GM12878 (cell line): ENCODE measurements at regions of chr21 and their contacts with region 1.

Region 1: DNA sequence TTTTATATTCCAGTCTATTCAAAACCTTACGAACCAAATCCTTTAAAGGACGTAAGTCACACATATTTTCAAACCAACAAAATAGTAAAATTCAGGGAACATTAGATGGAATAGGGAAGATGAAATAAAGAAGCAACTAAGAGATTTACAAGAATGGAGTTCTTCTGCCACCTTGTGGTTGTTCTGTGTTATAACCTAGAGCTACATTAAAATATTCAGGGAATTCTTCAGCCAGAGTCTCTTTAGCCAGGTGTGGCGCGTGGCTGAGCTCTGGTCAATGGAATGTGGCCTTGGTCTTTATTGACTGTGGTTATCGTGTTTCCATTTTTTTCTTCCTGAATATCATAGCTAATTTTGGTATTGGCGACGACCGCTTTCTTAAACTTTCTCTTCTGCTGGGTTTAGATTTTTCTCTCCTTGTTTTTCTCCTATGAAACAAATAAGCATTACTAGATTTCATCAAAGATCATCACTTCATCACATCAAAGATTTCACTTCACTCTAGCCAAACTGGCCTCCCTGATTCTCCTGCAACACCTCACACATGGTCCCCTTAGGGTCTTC is 221.3 kb downstream of the MRPL39 start:
- DNase-seq: no peak
- ATAC-seq: peak; percentile 54
- H3K4me3 ChIP-seq: no peak overlapping the region
- H3K27ac ChIP-seq: no peak overlapping the region
- H3K4me1 ChIP-seq: peaks cover 11% of the 10 kb centered on the region; the same call in 1 of the 2 replicates
- H3K27me3 ChIP-seq: no peaks in the 10 kb centered on the region
- CTCF ChIP-seq: peak; percentile 58 to 68 (median 66); a peak in 5 of 6 replicates
- EP300 ChIP-seq: no peak
- POLR2A ChIP-seq: no peak
- RAD21 ChIP-seq: peak; percentile 85

Region 2: GRCh38 chr21:24895885-24896734 is 489.9 kb before region 1 on chr21:
- CTCF ChIA-PET with region 1: interaction called, 70 read pairs
- POLR2A ChIA-PET with region 1: no interaction called
- RAD21 ChIA-PET with region 1: interaction called, 28 read pairs
- SMC1A ChIA-PET with region 1: interaction called, 69 read pairs
- in situ Hi-C with region 1: loop called (anchors 5 kb)
- intact Hi-C with region 1: loop called (anchors 1 kb)
- DNase-seq: peak; percentile 49
- ATAC-seq: peak; percentile 87
- H3K4me3 ChIP-seq: no peak overlapping the region
- H3K27ac ChIP-seq: no peak overlapping the region
- H3K4me1 ChIP-seq: no peaks in the 10 kb centered on the region
- H3K27me3 ChIP-seq: no peaks in the 10 kb centered on the region
- CTCF ChIP-seq: peak; percentile 48 to 62 (median 50)
- EP300 ChIP-seq: no peak
- POLR2A ChIP-seq: no peak
- RAD21 ChIP-seq: peak; percentile 91

Region 3: DNA sequence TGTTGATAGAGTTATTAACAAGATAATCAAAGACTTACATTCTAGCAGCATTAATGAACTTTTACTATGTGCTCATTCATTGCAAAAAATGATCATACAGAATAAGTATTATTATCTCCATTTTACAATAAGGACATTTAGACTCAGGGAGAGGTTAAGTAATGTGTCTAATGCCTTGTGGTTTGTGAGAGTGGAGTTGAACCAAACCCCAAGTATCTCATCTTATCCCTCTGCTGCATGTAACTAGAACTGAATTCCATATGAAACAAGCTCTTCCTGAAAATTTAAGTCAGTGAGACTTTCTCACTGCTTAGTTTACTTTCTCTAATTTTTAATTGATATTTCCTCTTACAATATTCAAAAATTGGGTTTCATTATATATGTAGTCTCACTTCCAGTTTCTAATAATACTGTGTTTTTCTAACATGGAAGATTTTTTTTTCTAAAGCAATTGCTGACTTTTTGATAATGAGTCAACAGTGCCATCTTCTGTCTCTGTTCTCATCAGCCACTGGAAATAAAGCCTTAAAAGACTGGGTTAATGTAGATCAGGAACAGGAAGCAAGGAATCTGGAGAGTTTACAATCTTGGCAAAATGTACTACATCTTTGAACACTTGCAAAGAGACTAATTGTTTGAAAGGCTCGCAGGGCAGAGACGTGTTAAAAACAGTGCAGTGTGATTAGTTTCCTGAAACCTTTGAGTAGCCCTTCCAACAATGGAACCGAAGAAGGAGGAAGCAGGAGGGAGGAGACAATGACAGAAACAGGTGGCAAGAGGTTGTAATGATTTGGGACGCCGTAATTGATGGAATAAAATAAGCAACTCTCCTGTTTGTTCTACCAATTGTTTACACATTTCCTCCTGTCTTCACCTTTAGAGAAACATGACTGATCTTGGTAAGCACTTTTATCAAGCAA is 346.3 kb before region 1 on chr21:
- CTCF ChIA-PET with region 1: interaction called, 7 read pairs
- POLR2A ChIA-PET with region 1: no interaction called
- RAD21 ChIA-PET with region 1: interaction called, 7 read pairs
- SMC1A ChIA-PET with region 1: interaction called, 3 read pairs
- in situ Hi-C with region 1: loop called (anchors 10 kb)
- intact Hi-C with region 1: loop called (anchors 2 kb)
- DNase-seq: peak; percentile 82
- ATAC-seq: peak; percentile 89
- H3K4me3 ChIP-seq: peak overlapping the region; percentile 20; the same call in 1 of the 2 replicates
- H3K27ac ChIP-seq: 0 out of 2 replicates have a peak overlapping the region, but pooled peaks have one; percentile 4
- H3K4me1 ChIP-seq: 0 out of 2 replicates have a peak, but pooled peaks cover 2% of the 10 kb centered on the region
- H3K27me3 ChIP-seq: no peaks in the 10 kb centered on the region
- CTCF ChIP-seq: peak; percentile 36 to 67 (median 66)
- EP300 ChIP-seq: 0 out of 4 replicates have a peak, but pooled peaks of 1 of the 2 experiments have one; percentile 40
- POLR2A ChIP-seq: no peak
- RAD21 ChIP-seq: peak; percentile 71

Region 4: DNA sequence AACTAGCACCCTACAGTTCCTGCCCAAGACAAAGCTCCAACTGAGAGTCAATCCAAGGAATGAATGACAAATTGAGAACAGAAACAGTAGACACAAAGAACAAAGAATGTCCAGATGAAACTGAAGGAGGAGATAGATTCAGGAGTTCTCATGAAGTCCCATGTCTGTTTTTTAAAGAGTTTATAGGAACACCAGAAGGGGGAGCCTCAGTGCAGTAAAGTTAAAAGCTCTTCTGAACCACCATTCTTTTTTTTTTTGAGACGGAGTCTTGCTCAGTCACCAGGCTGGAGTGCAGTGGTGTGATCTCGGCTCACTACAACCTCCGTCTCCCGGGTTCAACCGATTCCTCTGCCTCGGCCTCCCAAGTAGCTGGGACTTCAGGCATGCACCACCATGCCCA is 102.3 kb before region 1 on chr21:
- CTCF ChIA-PET with region 1: interaction called, 72 read pairs
- POLR2A ChIA-PET with region 1: no interaction called
- RAD21 ChIA-PET with region 1: interaction called, 23 read pairs
- SMC1A ChIA-PET with region 1: interaction called, 23 read pairs
- in situ Hi-C with region 1: no loop called
- intact Hi-C with region 1: loop called (anchors 5 kb)
- DNase-seq: no peak
- ATAC-seq: peak; percentile 76
- H3K4me3 ChIP-seq: no peak overlapping the region
- H3K27ac ChIP-seq: no peak overlapping the region
- H3K4me1 ChIP-seq: no peaks in the 10 kb centered on the region
- H3K27me3 ChIP-seq: no peaks in the 10 kb centered on the region
- CTCF ChIP-seq: peak; percentile 34 to 42 (median 35); a peak in 5 of 6 replicates
- EP300 ChIP-seq: no peak
- POLR2A ChIP-seq: no peak
- RAD21 ChIP-seq: peak; percentile 60

Region 5: DNA sequence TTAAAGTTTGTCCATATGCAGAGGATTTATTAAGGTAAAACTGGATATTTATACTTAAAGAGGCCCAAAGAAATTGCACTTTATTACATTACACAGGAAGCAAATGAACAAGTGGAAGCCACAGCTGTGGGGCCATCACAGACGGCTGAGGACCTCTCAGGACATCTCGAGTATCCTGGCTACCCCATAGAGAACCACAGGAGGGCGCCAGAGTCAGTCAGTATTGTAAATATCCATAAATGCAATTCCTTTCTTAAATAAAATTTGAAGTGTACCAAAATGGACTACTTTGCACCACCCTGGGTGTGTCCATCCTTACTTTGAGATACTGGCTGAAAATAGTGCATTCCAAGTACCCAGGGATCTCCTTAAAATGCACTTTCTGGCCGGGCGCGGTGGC is 35.9 kb before region 1 on chr21:
- CTCF ChIA-PET with region 1: interaction called, 56 read pairs
- POLR2A ChIA-PET with region 1: interaction called, 4 read pairs
- RAD21 ChIA-PET with region 1: interaction called, 14 read pairs
- SMC1A ChIA-PET with region 1: interaction called, 10 read pairs
- in situ Hi-C with region 1: no loop called
- intact Hi-C with region 1: no loop called
- DNase-seq: no peak
- ATAC-seq: peak; percentile 83
- H3K4me3 ChIP-seq: no peak overlapping the region
- H3K27ac ChIP-seq: no peak overlapping the region
- H3K4me1 ChIP-seq: no peaks in the 10 kb centered on the region
- H3K27me3 ChIP-seq: no peaks in the 10 kb centered on the region
- CTCF ChIP-seq: peak; percentile 45 to 55 (median 48); a peak in 5 of 6 replicates
- EP300 ChIP-seq: no peak
- POLR2A ChIP-seq: no peak
- RAD21 ChIP-seq: peak; percentile 55

Region 6: DNA sequence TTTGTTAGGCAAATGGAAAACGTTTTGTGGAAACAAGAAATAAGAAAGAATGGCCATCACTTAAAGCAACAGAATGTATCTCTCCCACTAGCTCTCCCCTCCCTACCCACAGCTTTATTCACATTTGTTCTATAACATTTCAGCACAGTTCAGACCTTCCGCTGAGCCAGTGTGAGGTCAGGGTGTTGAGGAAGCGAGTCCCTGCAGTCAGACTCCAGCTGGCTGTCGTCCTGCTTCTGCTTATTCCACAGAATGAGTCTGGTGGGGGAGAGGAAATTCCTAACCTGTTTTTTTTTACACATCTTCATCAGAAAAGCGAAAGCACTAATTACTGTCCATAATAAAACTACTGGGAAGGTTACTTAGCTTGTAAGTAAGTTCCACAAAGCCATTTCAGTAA is 182.3 kb after region 1 on chr21:
- CTCF ChIA-PET with region 1: interaction called, 6 read pairs
- POLR2A ChIA-PET with region 1: interaction called, 3 read pairs
- RAD21 ChIA-PET with region 1: interaction called, 11 read pairs
- SMC1A ChIA-PET with region 1: interaction called, 3 read pairs
- in situ Hi-C with region 1: no loop called
- intact Hi-C with region 1: no loop called
- DNase-seq: no peak
- ATAC-seq: peak; percentile 12
- H3K4me3 ChIP-seq: peak overlapping the region; percentile 87
- H3K27ac ChIP-seq: peak overlapping the region; percentile 92
- H3K4me1 ChIP-seq: peaks cover 16% of the 10 kb centered on the region; the same call in 1 of the 2 replicates
- H3K27me3 ChIP-seq: no peaks in the 10 kb centered on the region
- CTCF ChIP-seq: no peak
- EP300 ChIP-seq: no peak
- POLR2A ChIP-seq: peak; percentile 88
- RAD21 ChIP-seq: no peak

Region 7: DNA sequence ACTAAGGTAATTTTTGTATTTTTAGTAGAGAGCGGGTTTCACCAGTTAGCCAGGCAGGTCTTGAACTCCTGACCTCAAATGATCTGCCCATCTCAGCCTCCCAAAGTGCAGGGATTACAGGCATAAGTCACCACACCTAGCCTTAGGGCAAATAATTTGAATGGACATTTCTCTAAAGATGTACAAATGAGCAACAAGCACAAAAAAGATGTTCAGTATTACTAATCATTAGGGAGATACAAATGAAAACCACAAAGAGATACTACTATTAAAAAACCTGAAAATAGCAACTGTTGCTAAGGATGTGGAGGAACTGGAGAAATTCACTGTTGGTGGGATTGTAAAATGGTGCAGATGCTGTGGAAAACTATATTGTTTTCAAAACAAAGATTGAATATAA is 427.9 kb after region 1 on chr21:
- CTCF ChIA-PET with region 1: no interaction called
- POLR2A ChIA-PET with region 1: no interaction called
- RAD21 ChIA-PET with region 1: no interaction called
- SMC1A ChIA-PET with region 1: no interaction called
- in situ Hi-C with region 1: no loop called
- intact Hi-C with region 1: no loop called
- DNase-seq: no peak
- ATAC-seq: no peak
- H3K4me3 ChIP-seq: no peak overlapping the region
- H3K27ac ChIP-seq: no peak overlapping the region
- H3K4me1 ChIP-seq: no peaks in the 10 kb centered on the region
- H3K27me3 ChIP-seq: no peaks in the 10 kb centered on the region
- CTCF ChIP-seq: no peak
- EP300 ChIP-seq: no peak
- POLR2A ChIP-seq: no peak
- RAD21 ChIP-seq: no peak